ENCODE measurements at regions of chr15 and their contacts with region 1.

Region 1: DNA sequence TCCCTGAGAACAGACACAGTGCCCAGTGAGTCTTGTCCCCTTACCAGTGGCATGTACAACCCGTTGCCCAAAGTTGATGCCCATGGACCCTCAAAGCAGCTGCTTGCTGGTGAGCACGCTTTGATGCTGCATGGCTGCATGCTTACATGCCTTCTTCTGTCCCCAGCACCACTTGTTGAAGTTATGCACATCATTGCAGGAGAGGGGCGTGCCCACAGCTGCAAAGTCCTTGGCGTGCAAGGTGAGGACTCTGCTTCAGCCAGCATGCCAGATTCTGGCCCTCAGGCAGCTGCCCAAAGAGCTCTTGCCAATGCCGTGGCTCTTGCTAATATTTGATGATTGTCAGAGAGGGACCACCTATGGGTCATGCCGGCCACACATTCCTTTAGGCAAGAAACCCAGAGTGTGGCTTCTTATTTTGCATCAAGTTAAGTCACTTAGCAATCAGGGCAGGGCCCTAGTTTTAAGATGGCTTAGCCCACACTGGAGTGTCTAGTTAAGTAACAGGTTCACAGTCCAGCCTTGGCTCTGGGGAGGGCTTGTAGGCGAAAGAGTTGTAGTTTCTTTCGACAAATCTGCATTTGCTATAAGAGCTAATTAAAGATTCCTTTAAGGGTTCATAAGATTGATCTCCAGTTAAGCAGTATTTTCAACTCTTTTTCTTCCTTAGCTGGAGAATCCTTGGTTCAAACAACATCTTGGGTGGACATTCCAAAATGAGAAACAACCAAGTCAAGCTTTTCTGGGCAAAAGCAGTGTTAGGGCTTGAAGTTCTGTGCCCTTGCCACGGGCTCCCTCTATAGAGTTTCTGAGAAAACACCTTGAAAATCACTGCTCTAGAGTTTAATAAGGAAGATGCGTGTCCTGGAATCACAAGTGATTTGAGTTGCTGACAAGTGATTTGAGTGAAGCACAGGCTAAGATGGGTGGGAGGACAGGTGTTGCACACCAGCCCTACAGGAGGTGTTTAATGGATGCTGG is 128.6 kb downstream of the SLCO3A1 start:
- DNase-seq: no peak
- H3K4me3 ChIP-seq: no peak overlapping the region
- H3K27ac ChIP-seq: no peak overlapping the region
- H3K4me1 ChIP-seq: peaks cover 9% of the 10 kb centered on the region
- H3K27me3 ChIP-seq: no peaks in the 10 kb centered on the region
- CTCF ChIP-seq: peak; percentile 29 to 62

Region 2: DNA sequence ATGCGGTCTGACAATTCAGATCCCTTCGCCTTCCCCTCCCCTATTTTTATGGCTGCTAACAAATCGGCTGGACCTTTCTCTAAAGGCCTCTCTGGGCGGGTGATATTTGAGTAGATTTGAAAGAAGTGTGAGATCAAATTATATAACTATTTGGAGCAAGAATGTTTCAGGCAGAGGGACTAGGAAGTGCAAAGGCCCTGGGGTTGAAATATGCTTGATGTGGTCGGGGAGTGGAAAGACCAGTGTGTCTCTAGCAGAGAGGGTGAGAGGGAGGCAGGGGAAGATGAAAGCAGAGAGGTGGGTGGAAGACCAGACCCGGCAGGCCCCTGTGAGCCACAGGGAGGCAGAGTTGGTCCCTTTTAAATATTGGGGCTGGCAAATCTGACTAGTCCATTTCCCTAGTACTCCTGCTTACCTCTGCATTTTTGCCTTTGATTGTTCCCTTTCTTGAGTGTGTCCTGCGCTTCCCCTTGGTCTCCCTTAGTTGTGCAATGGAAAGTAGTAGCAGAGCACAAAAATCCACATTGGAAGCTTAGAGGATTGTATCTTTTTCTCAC is 96.3 kb before region 1 on chr15:
- CTCF ChIA-PET with region 1: interaction called, 3 read pairs
- dilution Hi-C with region 1: loop called (anchors 5 kb)
- in situ Hi-C with region 1: no loop called
- intact Hi-C with region 1: loop called (anchors 1 kb)
- DNase-seq: no peak
- H3K4me3 ChIP-seq: no peak overlapping the region
- H3K27ac ChIP-seq: no peak overlapping the region
- H3K4me1 ChIP-seq: peaks cover 32% of the 10 kb centered on the region
- H3K27me3 ChIP-seq: no peaks in the 10 kb centered on the region
- CTCF ChIP-seq: peak in 1 of 2 donors; percentile 38

Region 3: GRCh38 chr15:92082006-92082843 is 100.1 kb after region 1 on chr15:
- CTCF ChIA-PET with region 1: no interaction called
- dilution Hi-C with region 1: no loop called
- in situ Hi-C with region 1: no loop called
- intact Hi-C with region 1: no loop called
- DNase-seq: peak; percentile 57
- H3K4me3 ChIP-seq: no peak overlapping the region
- H3K27ac ChIP-seq: no peak overlapping the region
- H3K4me1 ChIP-seq: peaks cover 2% of the 10 kb centered on the region
- H3K27me3 ChIP-seq: no peaks in the 10 kb centered on the region
- CTCF ChIP-seq: peak; percentile 86 to 89